Natural killer cell (primary cell): ENCODE measurements at regions of chr3 and their contacts with region 1.

Region 1: DNA sequence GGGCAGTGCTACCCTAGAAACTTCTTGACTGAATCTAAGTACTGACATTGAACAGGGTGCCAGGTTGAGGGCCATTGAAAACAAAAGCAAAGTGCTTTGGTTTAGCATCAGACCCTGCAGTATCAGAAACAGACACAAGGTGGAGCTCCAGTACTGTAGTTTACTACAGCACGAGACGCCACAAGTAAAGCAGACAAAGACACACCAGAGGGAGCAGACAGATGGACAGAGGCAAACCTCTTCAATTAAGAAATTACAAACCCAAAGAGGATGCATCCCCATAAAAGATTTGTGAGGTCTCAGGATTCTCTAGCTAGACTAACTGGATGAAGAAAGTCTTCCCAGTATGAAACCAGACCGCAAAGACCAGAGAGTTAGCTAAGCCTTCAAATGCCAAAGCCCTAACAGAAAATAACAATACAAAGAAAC is 16.6 kb downstream of the TOP2B start:
- DNase-seq: peak; percentile 73 to 91
- ATAC-seq: peak; percentile 97 to 98 (median 98)
- H3K4me3 ChIP-seq: no peak overlapping the region
- H3K4me3 Mint-ChIP-seq: no peak overlapping the region
- H3K27ac ChIP-seq: no peak overlapping the region
- H3K27ac Mint-ChIP-seq: peak overlapping the region; percentile 65 to 66
- H3K4me1 ChIP-seq: no peaks in the 10 kb centered on the region
- H3K4me1 Mint-ChIP-seq: peaks cover 55 to 57% of the 10 kb centered on the region in 2 donors
- H3K27me3 ChIP-seq: no peaks in the 10 kb centered on the region
- H3K27me3 Mint-ChIP-seq: no peaks in the 10 kb centered on the region
- CTCF ChIP-seq: peak; percentile 95

Region 2: GRCh38 chr3:25664810-25665314 is 16.7 kb after region 1 on chr3 and contains the start of gene TOP2B:
- intact Hi-C with region 1: loop called (anchors 2 kb)
- DNase-seq: peak; percentile 94 to 97
- ATAC-seq: peak; percentile 88 to 98 (median 91)
- H3K4me3 ChIP-seq: peak within 1 kb of the TSS; percentile 90
- H3K4me3 Mint-ChIP-seq: peak within 1 kb of the TSS; percentile 99
- H3K27ac ChIP-seq: peak within 1 kb of the TSS; percentile 90
- H3K27ac Mint-ChIP-seq: peak within 1 kb of the TSS; percentile 99
- H3K4me1 ChIP-seq: peaks cover 16% of the 10 kb centered on the region
- H3K4me1 Mint-ChIP-seq: peaks cover 51 to 54% of the 10 kb centered on the region in 2 donors
- H3K27me3 ChIP-seq: no peaks in the 10 kb centered on the region
- H3K27me3 Mint-ChIP-seq: peaks cover 0 to 2% of the 10 kb centered on the region in 2 donors
- CTCF ChIP-seq: no peak
- total RNA-seq, gene TOP2B: 126 to 180 (median 152) TPM

Region 3: GRCh38 chr3:25725813-25726210 is 77.7 kb after region 1 on chr3:
- intact Hi-C with region 1: loop called (anchors 5 kb)
- DNase-seq: no peak
- ATAC-seq: no peak
- H3K4me3 ChIP-seq: no peak overlapping the region
- H3K4me3 Mint-ChIP-seq: no peak overlapping the region
- H3K27ac ChIP-seq: no peak overlapping the region
- H3K27ac Mint-ChIP-seq: peak overlapping the region in 1 of 2 donors; percentile 0
- H3K4me1 ChIP-seq: no peaks in the 10 kb centered on the region
- H3K4me1 Mint-ChIP-seq: no peaks in the 10 kb centered on the region
- H3K27me3 ChIP-seq: no peaks in the 10 kb centered on the region
- H3K27me3 Mint-ChIP-seq: no peaks in the 10 kb centered on the region
- CTCF ChIP-seq: no peak

Region 4: DNA sequence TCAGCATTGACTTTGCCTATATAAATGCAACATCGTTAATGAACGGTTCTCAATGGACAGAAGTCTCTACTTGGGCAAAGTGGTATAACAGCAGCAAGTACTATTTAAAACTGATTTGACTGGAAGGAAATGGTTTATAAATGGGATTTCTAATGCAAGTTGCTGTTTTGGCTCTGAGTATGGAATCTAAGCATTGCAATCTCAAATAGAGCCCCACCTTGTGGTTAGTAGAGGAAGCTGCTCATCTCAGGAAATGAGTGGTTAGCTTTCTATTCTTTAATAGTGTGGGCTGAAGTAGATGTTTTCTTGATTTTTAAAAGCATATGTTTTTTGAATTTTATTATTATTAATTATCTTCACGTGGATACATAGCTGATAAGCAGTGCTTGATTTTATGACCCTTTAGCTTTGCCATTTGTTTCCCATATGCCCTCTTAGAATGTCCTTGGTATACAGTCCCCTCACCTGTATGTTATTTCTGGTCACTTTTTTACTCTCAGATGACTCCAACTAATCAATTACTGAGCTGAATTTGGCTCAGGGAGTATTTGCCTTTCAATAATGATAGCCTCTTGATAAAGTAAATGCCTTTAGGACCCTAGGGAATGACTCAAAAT is 208.9 kb after region 1 on chr3:
- intact Hi-C with region 1: loop called (anchors 1 kb)
- DNase-seq: peak in 1 of 2 donors; percentile 69
- ATAC-seq: peak; percentile 71 to 90 (median 86)
- H3K4me3 ChIP-seq: no peak overlapping the region
- H3K4me3 Mint-ChIP-seq: no peak overlapping the region
- H3K27ac ChIP-seq: no peak overlapping the region
- H3K27ac Mint-ChIP-seq: no peak overlapping the region
- H3K4me1 ChIP-seq: no peaks in the 10 kb centered on the region
- H3K4me1 Mint-ChIP-seq: peaks cover 0 to 4% of the 10 kb centered on the region in 2 donors
- H3K27me3 ChIP-seq: no peaks in the 10 kb centered on the region
- H3K27me3 Mint-ChIP-seq: no peaks in the 10 kb centered on the region
- CTCF ChIP-seq: peak; percentile 87

Region 5: DNA sequence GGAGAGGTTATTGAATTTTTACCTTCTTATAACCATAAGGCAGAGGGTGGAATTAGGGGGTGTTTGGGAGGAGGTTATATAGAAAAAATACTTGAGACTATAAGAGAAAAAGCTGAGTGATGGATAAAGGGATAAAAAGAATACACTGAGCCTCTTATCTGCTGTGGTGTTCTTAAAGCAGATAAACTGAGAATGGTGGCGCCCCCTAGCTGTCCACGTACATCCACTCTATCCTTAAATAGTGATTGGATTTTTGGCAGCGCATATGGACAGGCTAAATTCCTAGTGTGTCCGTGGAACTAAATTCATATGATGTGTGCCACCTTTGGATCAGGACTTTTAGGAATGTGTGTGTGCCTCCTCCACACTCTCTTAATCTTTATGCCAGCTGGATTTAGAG is 262.9 kb after region 1 on chr3:
- intact Hi-C with region 1: loop called (anchors 1 kb)
- DNase-seq: peak in 1 of 2 donors; percentile 62
- ATAC-seq: no peak
- H3K4me3 ChIP-seq: no peak overlapping the region
- H3K4me3 Mint-ChIP-seq: peak overlapping the region; percentile 72
- H3K27ac ChIP-seq: peak overlapping the region; percentile 93
- H3K27ac Mint-ChIP-seq: peak overlapping the region; percentile 95 to 98
- H3K4me1 ChIP-seq: peaks cover 12% of the 10 kb centered on the region
- H3K4me1 Mint-ChIP-seq: peaks cover 32 to 33% of the 10 kb centered on the region in 2 donors
- H3K27me3 ChIP-seq: peaks cover 2% of the 10 kb centered on the region
- H3K27me3 Mint-ChIP-seq: peaks cover 0 to 3% of the 10 kb centered on the region in 2 donors
- CTCF ChIP-seq: peak; percentile 12